PC-9 (cell line): ENCODE measurements at regions of chr16 and their contacts with region 1.

Region 1: DNA sequence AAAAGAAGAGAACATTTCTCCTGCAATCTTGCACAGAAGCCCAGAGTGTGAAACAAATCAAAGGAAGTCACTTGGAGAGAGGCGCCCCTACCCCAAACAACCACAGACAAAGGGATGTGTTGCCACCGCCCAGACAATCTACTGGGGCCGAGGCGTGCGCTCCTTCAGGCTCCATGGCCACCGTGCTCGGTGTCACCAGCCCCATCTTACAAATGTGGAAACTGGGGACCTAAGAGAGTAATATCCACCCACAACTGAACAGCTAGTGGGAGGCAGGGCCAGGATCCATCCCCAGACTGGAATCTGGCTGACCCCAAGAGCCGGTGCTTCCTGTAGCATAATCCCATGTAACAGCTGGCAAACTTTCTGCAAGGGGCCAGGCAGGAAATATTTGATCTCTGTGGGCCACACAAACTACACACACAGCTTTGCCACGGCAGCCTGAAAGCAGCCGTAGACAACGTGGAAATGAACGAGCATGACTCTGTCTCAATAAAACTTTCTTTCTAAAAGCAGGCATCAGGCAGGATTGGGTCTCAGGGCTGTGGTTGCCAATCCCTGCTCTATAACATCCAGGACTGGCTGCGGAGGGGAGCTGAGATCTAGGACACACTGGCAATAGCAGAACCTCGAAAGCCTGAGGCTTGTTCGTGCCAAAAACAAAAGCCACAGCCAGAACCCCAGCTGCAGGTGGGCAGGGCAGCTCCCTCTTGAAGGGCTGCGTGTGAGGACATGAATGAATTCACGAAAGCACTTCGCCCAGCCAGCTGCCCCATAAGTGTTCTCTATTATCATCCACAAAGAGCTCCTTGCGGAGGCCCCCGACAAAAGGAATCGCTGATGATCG is 26.6 kb upstream of the GINS2 start:
- DNase-seq: no peak
- H3K4me3 ChIP-seq: no peak overlapping the region
- H3K27ac ChIP-seq: no peak overlapping the region
- H3K4me1 ChIP-seq: peaks cover 8% of the 10 kb centered on the region; the same call in 1 of the 2 replicates
- H3K27me3 ChIP-seq: no peaks in the 10 kb centered on the region
- CTCF ChIP-seq: no peak

Region 2: DNA sequence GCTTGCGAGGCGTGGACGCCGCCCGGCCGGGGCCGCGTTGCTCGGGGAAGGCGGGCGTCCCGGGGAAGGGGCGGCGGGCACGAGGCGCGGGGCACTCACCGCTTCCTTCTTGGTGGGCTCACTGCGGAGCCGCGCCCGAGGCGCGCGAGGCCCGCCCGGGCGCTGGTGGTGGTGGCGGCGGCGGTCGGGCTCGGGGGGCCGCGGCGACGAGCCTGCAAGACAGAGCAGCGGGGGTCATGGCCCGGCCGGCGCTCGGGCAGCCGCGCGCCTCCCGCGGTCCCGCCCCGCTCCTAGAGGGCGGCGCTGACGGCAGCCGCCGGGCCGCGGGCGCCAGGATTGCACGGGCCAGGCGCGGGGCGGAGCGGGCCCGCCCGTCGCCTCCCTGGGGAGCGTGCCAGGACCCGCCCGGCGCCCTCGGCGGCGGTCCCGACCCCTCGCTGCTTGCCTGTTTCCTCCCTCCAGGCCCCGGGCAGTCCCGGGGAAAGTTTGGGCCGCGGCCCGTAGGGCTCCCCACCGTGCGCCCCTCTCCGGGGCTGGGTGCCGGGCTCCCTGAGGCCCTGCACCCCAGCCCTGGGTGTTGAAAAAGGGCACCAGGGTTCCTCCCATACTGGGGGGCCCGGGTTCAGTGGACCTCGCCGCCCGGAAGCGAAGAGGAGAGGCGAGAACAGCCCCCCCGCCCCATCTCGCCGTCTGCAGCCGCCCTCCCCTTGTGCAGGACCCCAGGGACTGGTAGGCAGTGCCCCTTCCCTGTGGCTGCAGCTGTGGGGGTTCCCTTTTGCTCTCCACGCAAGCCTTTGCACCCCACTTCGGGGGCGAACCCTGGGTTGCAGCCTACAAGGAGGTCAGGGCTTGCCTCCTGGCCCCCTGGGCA is 35.7 kb after region 1 on chr16 and contains the start of gene C16orf74:
- CTCF ChIA-PET with region 1: interaction called, 4 read pairs
- POLR2A ChIA-PET with region 1: no interaction called
- intact Hi-C with region 1: loop called (anchors 2 kb)
- DNase-seq: peak in 1 of 2 experiments; percentile 73
- H3K4me3 ChIP-seq: peak within 1 kb of the TSS; percentile 91
- H3K27ac ChIP-seq: peak within 1 kb of the TSS; percentile 74
- H3K4me1 ChIP-seq: peaks cover 66% of the 10 kb centered on the region
- H3K27me3 ChIP-seq: no peaks in the 10 kb centered on the region
- CTCF ChIP-seq: no peak
- total RNA-seq, gene C16orf74: 44.3 and 51.6 TPM in 2 replicates